Right lobe of liver (tissue), 6 donors: ENCODE measurements at regions of chr11 and their contacts with region 1.

Region 1: DNA sequence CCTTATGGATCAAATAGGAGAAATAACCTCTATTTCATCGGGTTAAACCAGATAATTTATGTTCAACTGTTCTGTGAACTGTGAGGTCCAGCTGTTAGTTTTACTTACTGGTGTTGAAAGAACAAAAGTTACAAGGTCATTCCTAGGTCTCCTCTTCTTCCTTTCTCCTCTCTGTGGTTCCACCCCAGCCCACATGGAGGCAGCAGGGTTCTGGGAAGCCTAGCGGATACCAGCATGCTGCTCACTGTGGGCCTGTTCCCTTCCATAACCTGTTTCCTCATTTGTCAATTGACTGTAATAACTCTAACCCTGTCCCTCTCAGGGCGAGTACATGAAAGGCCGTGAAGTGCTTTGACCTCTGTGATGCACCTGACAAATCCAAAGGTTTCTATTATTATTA is 27.8 kb downstream of the RELT start:
- DNase-seq: peak in 2 of 3 donors; percentile 69 to 74
- ATAC-seq: peak; percentile 83 to 93 (median 89)
- H3K4me3 ChIP-seq: no peak overlapping the region
- H3K27ac ChIP-seq: no peak overlapping the region
- H3K4me1 ChIP-seq: peaks cover 0 to 3% (median 0%) of the 10 kb centered on the region in 4 donors
- H3K27me3 ChIP-seq: no peaks in the 10 kb centered on the region
- CTCF ChIP-seq: peak; percentile 58 to 66 (median 62)
- POLR2A ChIP-seq: no peak

Region 2: GRCh38 chr11:73350908-73351636 is 53.0 kb before region 1 on chr11:
- intact Hi-C with region 1: no loop called
- DNase-seq: no peak
- ATAC-seq: peak; percentile 76 to 90 (median 88)
- H3K4me3 ChIP-seq: no peak overlapping the region
- H3K27ac ChIP-seq: no peak overlapping the region
- H3K4me1 ChIP-seq: no peaks in the 10 kb centered on the region
- H3K27me3 ChIP-seq: no peaks in the 10 kb centered on the region
- CTCF ChIP-seq: peak; percentile 89 to 99 (median 98)
- POLR2A ChIP-seq: no peak

Region 3: DNA sequence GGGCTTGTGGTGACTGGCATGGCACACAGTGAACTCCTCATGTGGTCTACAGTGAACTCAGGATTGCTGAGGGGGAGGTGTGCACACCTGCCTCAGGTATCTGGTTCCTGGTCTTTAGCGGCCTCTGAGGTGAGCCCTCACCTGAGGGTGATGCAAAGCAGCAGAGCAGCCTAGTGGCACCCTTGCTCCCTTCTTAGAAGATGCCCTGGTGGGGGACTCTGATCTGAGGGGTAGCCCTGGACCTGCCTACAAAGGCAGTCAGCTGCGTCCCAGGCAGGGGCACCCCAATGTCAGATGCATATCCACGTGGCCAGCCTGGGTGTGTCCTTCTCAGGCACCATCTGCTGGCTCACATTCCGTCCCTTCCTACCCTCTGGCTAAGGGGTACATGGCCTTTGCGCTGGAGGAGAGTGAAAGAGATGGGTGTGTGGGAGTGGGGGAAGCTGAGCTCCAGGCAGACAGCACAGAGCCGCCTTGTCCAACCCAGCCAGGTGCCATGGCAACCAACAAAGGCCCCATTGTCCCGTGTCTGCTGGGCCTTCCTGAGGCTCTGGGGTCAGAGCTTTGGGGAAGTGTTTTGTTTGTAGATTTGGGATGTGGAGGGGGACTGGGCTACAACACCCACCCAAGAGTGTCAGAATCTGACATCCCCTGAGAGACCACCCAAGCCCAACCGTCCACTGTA is 248.1 kb after region 1 on chr11:
- intact Hi-C with region 1: loop called in 1 of 2 experiments (anchors 10 kb)
- DNase-seq: no peak
- ATAC-seq: peak in 1 of 4 donors; percentile 21
- H3K4me3 ChIP-seq: no peak overlapping the region
- H3K27ac ChIP-seq: no peak overlapping the region
- H3K4me1 ChIP-seq: peaks cover 0 to 7% (median 0%) of the 10 kb centered on the region in 4 donors
- H3K27me3 ChIP-seq: no peaks in the 10 kb centered on the region
- CTCF ChIP-seq: no peak
- POLR2A ChIP-seq: no peak